ENCODE measurements at regions of chr2 and their contacts with region 1.

Region 1: GRCh38 chr2:152466980-152467676 is 132.2 kb downstream of the FMNL2 start:
- DNase-seq: peak; percentile 71 to 90 (median 82)
- H3K4me3 ChIP-seq: peak overlapping the region in 1 of 3 experiments; percentile 39
- H3K4me3 Mint-ChIP-seq: peak overlapping the region; percentile 44 to 77
- H3K27ac ChIP-seq: peak overlapping the region; percentile 43 to 77
- H3K27ac Mint-ChIP-seq: peak overlapping the region; percentile 79 to 93 (median 90)
- H3K4me1 ChIP-seq: peaks cover 40 to 48% of the 10 kb centered on the region in 2 donors
- H3K4me1 Mint-ChIP-seq: peaks cover 44% of the 10 kb centered on the region
- H3K27me3 ChIP-seq: no peaks in the 10 kb centered on the region
- H3K27me3 Mint-ChIP-seq: peaks cover 0 to 2% (median 0%) of the 10 kb centered on the region in 3 donors
- CTCF ChIP-seq: no peak

Region 2: DNA sequence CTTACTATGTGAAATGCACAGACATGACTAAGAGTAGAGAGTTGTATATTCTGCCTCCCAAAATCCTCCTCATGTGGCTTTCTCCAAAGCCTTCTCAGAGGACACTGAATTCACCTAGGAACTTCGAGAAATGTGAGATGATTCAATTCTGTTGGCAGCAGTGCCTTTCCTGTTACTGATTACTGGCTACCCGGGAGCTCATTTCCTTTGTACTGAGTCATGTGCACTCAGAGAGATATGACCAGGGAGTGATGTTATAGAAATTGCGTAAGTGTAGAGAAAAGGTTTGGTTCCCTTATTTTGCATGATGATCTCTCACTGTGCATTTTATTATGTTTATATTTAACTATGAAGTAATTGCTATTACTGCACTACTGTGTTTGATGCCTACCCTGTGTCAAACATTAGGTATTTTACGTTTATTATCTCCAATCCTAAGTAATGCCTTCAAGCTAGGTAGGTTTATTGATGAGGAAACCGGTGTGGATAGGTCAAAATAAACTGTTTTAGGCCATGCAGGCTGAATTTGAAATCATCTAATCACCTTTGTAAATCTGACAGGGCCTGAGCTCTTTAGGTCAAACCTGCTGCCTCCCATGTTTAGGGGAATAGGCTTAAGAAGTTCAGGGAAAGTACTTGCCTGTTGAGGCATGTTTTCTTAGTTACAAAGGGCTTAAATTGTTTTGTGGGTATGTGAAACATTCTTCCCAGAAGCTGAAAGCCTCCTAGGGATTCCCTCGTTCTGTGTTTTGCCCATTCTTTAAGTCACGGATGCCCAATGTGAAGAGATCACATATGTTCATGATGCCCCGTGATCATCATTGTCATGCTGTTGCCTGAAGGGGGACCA is 45.4 kb before region 1 on chr2:
- intact Hi-C with region 1: loop called in 1 of 2 experiments (anchors 10 kb)
- DNase-seq: peak; percentile 90 to 98 (median 97)
- H3K4me3 ChIP-seq: peak overlapping the region in 2 of 3 experiments; percentile 16 to 57
- H3K4me3 Mint-ChIP-seq: peak overlapping the region; percentile 37 to 84
- H3K27ac ChIP-seq: peak overlapping the region; percentile 64 to 94
- H3K27ac Mint-ChIP-seq: peak overlapping the region; percentile 96 to 99 (median 97)
- H3K4me1 ChIP-seq: peaks cover 51 to 56% of the 10 kb centered on the region in 2 donors
- H3K4me1 Mint-ChIP-seq: peaks cover 53% of the 10 kb centered on the region
- H3K27me3 ChIP-seq: no peaks in the 10 kb centered on the region
- H3K27me3 Mint-ChIP-seq: no peaks in the 10 kb centered on the region
- CTCF ChIP-seq: no peak

Region 3: DNA sequence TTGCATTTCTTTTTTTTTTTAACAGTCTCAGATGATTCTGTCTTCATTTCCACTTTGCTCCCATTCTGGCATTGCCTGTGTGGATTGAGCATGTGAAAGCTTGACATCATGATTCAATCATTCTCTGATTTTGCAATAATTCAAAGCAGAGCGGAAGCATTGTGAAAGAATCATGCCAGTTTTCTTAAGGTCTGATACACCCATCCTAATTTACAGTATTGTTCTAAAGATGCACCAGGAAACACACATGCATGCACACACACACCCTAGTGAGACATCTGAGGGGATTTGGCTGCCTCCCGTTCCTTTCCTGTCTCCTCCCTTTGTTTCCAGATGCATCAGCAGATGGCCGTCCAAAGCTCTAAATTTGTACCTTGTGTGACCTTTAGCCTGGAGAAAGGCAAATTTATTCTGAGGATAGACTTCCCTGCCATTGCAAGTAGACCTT is 34.9 kb before region 1 on chr2:
- intact Hi-C with region 1: loop called in 1 of 2 experiments (anchors 5 kb)
- DNase-seq: peak; percentile 87 to 97 (median 92)
- H3K4me3 ChIP-seq: peak overlapping the region in 1 of 3 experiments; percentile 43
- H3K4me3 Mint-ChIP-seq: peak overlapping the region in 1 of 2 donors; percentile 44
- H3K27ac ChIP-seq: peak overlapping the region; percentile 35 to 81
- H3K27ac Mint-ChIP-seq: peak overlapping the region; percentile 90 to 98 (median 96)
- H3K4me1 ChIP-seq: peaks cover 30% of the 10 kb centered on the region in 2 donors
- H3K4me1 Mint-ChIP-seq: peaks cover 30% of the 10 kb centered on the region
- H3K27me3 ChIP-seq: no peaks in the 10 kb centered on the region
- H3K27me3 Mint-ChIP-seq: peaks cover 0 to 3% (median 0%) of the 10 kb centered on the region in 3 donors
- CTCF ChIP-seq: no peak

Region 4: DNA sequence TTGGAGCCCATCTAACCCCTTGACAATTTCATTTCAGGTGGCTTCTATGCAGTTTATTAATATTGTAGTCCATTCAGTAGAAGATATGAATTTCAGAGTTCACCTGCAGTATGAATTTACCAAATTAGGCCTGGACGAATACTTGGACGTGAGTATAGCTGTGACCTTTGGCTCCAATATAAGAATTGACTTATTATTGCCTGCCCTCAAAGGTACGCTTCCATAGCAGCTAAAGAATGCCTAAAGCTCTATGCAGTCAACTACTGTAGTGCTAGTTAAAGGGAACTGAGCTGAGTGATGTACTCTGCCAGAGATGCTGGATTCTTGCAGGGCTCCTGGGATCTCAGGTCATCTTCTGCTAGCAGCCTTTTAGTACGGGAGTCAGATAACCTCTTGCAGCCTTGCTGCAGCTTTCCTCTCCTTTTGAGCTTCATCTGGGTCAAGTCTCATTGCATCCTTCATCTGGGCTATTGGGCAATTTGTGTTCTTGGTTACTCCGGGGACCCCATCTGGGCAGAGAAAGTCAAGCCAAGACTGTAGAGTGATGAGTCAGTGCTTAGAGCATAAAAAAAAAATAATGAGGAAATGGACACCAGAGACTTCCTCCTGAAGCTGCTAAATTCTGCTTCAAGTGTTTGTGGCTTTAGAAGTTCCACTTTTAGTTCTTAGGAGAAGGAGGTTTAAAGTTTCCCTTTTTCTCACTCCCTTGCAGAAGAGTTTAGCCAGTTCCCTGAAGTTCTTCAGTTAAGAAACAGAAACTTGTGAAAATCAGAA is 144.5 kb after region 1 on chr2:
- intact Hi-C with region 1: loop called in 1 of 2 experiments (anchors 5 kb)
- DNase-seq: peak; percentile 89 to 97 (median 95)
- H3K4me3 ChIP-seq: peak overlapping the region; percentile 28 to 77 (median 50)
- H3K4me3 Mint-ChIP-seq: peak overlapping the region; percentile 73 to 90
- H3K27ac ChIP-seq: peak overlapping the region; percentile 93 to 98
- H3K27ac Mint-ChIP-seq: peak overlapping the region; percentile 97 to 100 (median 99)
- H3K4me1 ChIP-seq: peaks cover 47 to 54% of the 10 kb centered on the region in 2 donors
- H3K4me1 Mint-ChIP-seq: peaks cover 51% of the 10 kb centered on the region
- H3K27me3 ChIP-seq: no peaks in the 10 kb centered on the region
- H3K27me3 Mint-ChIP-seq: no peaks in the 10 kb centered on the region
- CTCF ChIP-seq: no peak

Region 5: DNA sequence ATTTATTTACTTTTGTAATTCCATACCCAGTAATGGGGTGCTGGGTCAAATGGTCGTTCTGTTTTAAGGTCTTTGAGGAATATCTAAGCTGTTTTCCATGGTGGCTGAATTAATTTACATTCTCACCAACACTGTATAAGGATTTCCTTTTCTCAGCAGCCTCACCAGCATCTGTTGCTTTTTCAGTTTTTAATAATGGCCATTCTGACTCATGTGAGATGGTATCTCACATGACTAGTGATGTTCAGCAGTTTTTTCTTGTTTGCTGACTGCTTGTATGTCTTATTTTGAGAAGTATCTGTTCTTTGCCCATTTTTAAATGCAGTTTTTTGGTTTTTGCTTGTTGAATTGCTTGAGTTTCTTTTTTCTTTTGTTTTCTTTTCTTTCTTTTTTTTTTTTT is 810.4 kb after region 1 on chr2:
- intact Hi-C with region 1: no loop called
- DNase-seq: no peak
- H3K4me3 ChIP-seq: no peak overlapping the region
- H3K4me3 Mint-ChIP-seq: no peak overlapping the region
- H3K27ac ChIP-seq: no peak overlapping the region
- H3K27ac Mint-ChIP-seq: no peak overlapping the region
- H3K4me1 ChIP-seq: no peaks in the 10 kb centered on the region
- H3K4me1 Mint-ChIP-seq: no peaks in the 10 kb centered on the region
- H3K27me3 ChIP-seq: no peaks in the 10 kb centered on the region
- H3K27me3 Mint-ChIP-seq: no peaks in the 10 kb centered on the region
- CTCF ChIP-seq: no peak

Measured in CD14-positive monocyte (primary cell).